HepG2 (cell line): ENCODE measurements at regions of chr12 and their contacts with region 1.

Region 1: DNA sequence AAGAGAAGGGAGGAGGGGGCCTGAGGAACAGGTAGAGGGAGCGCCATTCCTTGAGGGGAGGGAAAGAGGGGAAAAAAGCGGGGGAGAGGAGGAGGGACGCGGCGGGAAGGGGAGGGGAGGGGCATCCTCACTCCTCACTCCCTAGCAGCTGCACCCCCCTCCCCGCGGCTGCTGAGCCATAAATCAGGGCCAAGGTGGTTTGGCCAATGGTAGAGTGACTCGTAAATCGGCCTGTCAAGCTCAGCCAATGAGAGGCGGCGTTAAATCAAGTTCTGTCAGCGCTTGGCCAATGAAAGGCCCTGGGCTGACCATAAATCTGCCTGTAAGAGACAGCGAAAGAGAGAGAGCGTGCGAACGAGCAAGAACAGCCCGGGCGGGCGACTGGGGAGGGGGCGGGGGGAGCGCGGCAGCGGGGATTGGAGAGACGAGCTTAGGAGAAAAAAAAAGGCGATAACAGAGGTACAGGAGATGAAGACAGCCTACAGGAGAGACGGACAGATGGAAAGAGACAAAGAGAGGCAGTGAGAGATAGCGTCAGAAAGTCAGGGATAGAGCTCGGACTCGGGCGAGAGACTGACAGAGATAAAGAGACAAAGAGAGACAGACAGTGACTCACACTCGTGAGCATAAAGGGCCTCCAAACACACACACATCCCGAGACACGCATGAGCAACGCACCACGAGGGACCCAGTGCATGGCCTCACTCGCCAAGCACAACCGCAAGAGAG is 5.1 kb downstream of the GPR84 start:
- DNase-seq: peak; percentile 98
- ATAC-seq: peak; percentile 95
- H3K4me3 ChIP-seq: peak overlapping the region; percentile 75 to 81 (median 78)
- H3K27ac ChIP-seq: peak overlapping the region; percentile 52
- H3K4me1 ChIP-seq: peaks cover 42% of the 10 kb centered on the region
- H3K27me3 ChIP-seq: no peaks in the 10 kb centered on the region; a peak in 1 of 5 replicates
- CTCF ChIP-seq: no peak
- EP300 ChIP-seq: peak in 1 of 2 experiments; percentile 41; a peak in 1 of 4 replicates
- POLR2A ChIP-seq: peak in 1 of 2 experiments; percentile 41
- RAD21 ChIP-seq: no peak

Region 2: GRCh38 chr12:54214553-54215406 is 144.4 kb before region 1 on chr12:
- CTCF ChIA-PET with region 1: interaction called, 22 read pairs
- POLR2A ChIA-PET with region 1: no interaction called
- in situ Hi-C with region 1: loop called (anchors 5 kb)
- intact Hi-C with region 1: no loop called
- DNase-seq: peak; percentile 85
- ATAC-seq: peak; percentile 92
- H3K4me3 ChIP-seq: peak overlapping the region in 2 of 3 experiments; percentile 30 to 61; a peak in 1 of 6 replicates
- H3K27ac ChIP-seq: no peak overlapping the region
- H3K4me1 ChIP-seq: peaks cover 28% of the 10 kb centered on the region
- H3K27me3 ChIP-seq: peaks cover 0 to 28% of the 10 kb centered on the region in 2 experiments; a peak in 4 of 5 replicates
- CTCF ChIP-seq: peak; percentile 95
- EP300 ChIP-seq: no peak
- POLR2A ChIP-seq: no peak
- RAD21 ChIP-seq: peak; percentile 85

Region 3: GRCh38 chr12:54251667-54252284 is 107.4 kb before region 1 on chr12:
- CTCF ChIA-PET with region 1: interaction called, 40 read pairs
- POLR2A ChIA-PET with region 1: interaction called, 4 read pairs
- in situ Hi-C with region 1: no loop called
- intact Hi-C with region 1: loop called (anchors 1 kb)
- DNase-seq: peak; percentile 38
- ATAC-seq: peak; percentile 52; the same call in 1 of the 3 replicates
- H3K4me3 ChIP-seq: no peak overlapping the region
- H3K27ac ChIP-seq: no peak overlapping the region
- H3K4me1 ChIP-seq: no peaks in the 10 kb centered on the region
- H3K27me3 ChIP-seq: no peaks in the 10 kb centered on the region
- CTCF ChIP-seq: peak; percentile 59
- EP300 ChIP-seq: no peak
- POLR2A ChIP-seq: no peak
- RAD21 ChIP-seq: peak; percentile 32; the same call in 1 of the 2 replicates

Region 4: GRCh38 chr12:54285150-54286041 is 73.8 kb before region 1 on chr12:
- CTCF ChIA-PET with region 1: no interaction called
- POLR2A ChIA-PET with region 1: interaction called, 53 read pairs
- in situ Hi-C with region 1: no loop called
- intact Hi-C with region 1: no loop called
- DNase-seq: no peak
- ATAC-seq: no peak
- H3K4me3 ChIP-seq: no peak overlapping the region; a peak in 1 of 6 replicates
- H3K27ac ChIP-seq: peak overlapping the region; percentile 16
- H3K4me1 ChIP-seq: peaks cover 48% of the 10 kb centered on the region
- H3K27me3 ChIP-seq: no peaks in the 10 kb centered on the region; a peak in 1 of 5 replicates
- CTCF ChIP-seq: no peak
- EP300 ChIP-seq: no peak
- POLR2A ChIP-seq: no peak; a peak in 1 of 4 replicates
- RAD21 ChIP-seq: no peak

Region 5: GRCh38 chr12:54300732-54301427 is 58.3 kb before region 1 on chr12 and contains the start of gene NFE2:
- CTCF ChIA-PET with region 1: interaction called, 27 read pairs
- POLR2A ChIA-PET with region 1: interaction called, 4 read pairs
- in situ Hi-C with region 1: loop called (anchors 5 kb)
- intact Hi-C with region 1: no loop called
- DNase-seq: peak; percentile 58
- ATAC-seq: peak; percentile 87
- H3K4me3 ChIP-seq: peak within 1 kb of the TSS; percentile 56 to 78 (median 63)
- H3K27ac ChIP-seq: peak within 1 kb of the TSS; percentile 91
- H3K4me1 ChIP-seq: peaks cover 82% of the 10 kb centered on the region
- H3K27me3 ChIP-seq: no peaks in the 10 kb centered on the region
- CTCF ChIP-seq: no peak; the same call in 1 of the 2 replicates
- EP300 ChIP-seq: no peak; a peak in 1 of 4 replicates
- POLR2A ChIP-seq: peak; percentile 51 to 72
- RAD21 ChIP-seq: no peak
- total RNA-seq, gene NFE2: 7.8 and 8.5 TPM in 2 replicates

Region 6: GRCh38 chr12:54394281-54394719 is 35.1 kb after region 1 on chr12:
- CTCF ChIA-PET with region 1: no interaction called
- POLR2A ChIA-PET with region 1: no interaction called
- in situ Hi-C with region 1: no loop called
- intact Hi-C with region 1: no loop called
- DNase-seq: peak; percentile 25
- ATAC-seq: peak; percentile 55; the same call in 2 of the 3 replicates
- H3K4me3 ChIP-seq: no peak overlapping the region
- H3K27ac ChIP-seq: no peak overlapping the region
- H3K4me1 ChIP-seq: peaks cover 12% of the 10 kb centered on the region; the same call in 1 of the 2 replicates
- H3K27me3 ChIP-seq: peaks cover 0 to 2% of the 10 kb centered on the region in 2 experiments; a peak in 2 of 5 replicates
- CTCF ChIP-seq: peak; percentile 68
- EP300 ChIP-seq: no peak
- POLR2A ChIP-seq: no peak
- RAD21 ChIP-seq: no peak